ENCODE measurements at regions of chr4 and their contacts with region 1.

Region 1: GRCh38 chr4:111937368-111937767 is 207.9 kb upstream of the FAM241A start:
- DNase-seq: no peak
- H3K4me3 ChIP-seq: no peak overlapping the region
- CTCF ChIP-seq: no peak
- POLR2A ChIP-seq: no peak

Region 2: DNA sequence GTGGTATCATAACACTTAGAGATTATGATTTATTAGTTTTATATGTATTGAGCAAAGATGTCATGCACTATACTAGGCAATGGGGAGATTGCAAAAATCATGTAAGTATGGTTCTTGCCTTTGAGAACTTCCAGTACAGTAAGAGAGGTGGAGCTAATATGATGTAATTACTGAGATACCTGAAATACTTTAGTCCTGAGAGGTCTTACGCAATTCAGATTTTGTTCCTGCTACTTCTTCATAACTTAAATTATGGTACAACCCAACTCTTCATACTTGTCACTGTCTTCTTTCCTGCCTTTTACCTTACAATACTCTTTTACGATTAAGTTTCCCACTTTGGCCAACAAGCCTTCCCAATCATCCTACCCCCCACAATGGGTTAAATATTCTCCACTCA is 750.3 kb before region 1 on chr4:
- intact Hi-C with region 1: no loop called
- DNase-seq: no peak
- H3K4me3 ChIP-seq: no peak overlapping the region
- CTCF ChIP-seq: no peak
- POLR2A ChIP-seq: no peak

Region 3: DNA sequence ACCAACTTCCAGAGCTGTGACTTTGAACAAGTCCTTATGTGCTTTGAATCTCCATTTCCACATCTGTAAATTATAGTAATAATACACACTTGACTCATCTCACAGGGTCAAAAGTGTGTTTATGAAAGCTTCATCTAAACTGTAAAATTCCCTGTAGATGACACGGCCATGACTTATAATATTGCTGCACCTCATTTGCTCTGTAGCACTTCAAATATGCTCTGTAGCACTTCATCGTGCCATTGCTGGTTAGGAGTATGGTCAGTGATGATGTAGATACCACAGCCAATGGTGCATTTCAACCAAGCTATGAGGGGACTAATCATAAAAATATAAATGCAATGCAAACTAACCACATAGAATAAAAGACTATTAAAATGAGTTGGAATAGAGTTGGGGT is 1430.7 kb after region 1 on chr4:
- intact Hi-C with region 1: loop called (anchors 10 kb)
- DNase-seq: no peak
- H3K4me3 ChIP-seq: no peak overlapping the region
- CTCF ChIP-seq: no peak
- POLR2A ChIP-seq: no peak

Measured in lower leg skin (tissue), 4 donors.